ENCODE measurements at regions of chr14 and their contacts with region 1.

Region 1: GRCh38 chr14:22386924-22387775 is 201.9 kb downstream of the DAD1 start:
- DNase-seq: peak; percentile 67 to 77
- H3K4me3 ChIP-seq: no peak overlapping the region
- H3K4me3 Mint-ChIP-seq: no peak overlapping the region
- H3K27ac Mint-ChIP-seq: peak overlapping the region; percentile 38
- H3K4me1 ChIP-seq: peaks cover 66% of the 10 kb centered on the region
- H3K4me1 Mint-ChIP-seq: peaks cover 54% of the 10 kb centered on the region
- H3K27me3 ChIP-seq: no peaks in the 10 kb centered on the region
- H3K27me3 Mint-ChIP-seq: no peaks in the 10 kb centered on the region
- CTCF ChIP-seq: peak; percentile 64 to 69

Region 2: DNA sequence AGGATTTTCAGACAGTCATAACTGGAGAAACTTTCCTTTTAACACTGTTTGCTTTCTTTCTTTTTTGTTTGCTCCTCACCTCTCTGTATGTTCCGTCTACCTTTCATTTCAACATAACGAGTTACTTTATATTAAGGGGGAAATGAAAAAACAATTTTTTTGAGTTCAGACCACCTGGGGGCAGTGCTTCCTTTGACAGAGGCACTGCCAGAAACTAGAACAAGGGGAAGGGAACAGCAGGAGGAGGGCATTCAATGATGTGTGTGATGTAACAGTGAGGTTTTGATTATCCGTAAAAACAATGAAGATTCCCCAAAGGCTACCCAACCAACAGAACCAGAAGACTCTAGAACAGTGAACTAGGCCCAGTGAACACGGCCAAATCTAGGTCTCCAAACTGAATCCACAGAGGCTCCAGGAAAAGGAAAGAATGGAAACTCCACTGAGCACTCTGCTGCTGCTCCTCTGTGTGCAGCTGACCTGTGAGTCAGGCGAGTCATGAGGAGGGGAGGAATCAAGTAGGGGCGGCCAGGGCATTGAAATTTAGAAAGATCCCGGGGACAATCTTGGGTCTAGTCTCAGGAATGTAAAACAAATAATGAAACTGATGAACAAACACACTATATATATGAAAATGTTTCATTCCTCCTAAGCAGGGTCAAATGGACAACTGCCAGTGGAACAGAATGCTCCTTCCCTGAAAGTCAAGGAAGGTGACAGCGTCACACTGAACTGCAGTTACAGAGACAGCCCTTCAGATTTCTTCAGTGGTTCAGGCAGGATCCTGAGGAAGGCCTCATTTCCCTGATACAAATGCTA is 121.6 kb before region 1 on chr14:
- CTCF ChIA-PET with region 1: no interaction called
- POLR2A ChIA-PET with region 1: no interaction called
- intact Hi-C with region 1: loop called (anchors 2 kb)
- DNase-seq: peak; percentile 39 to 59
- H3K4me3 ChIP-seq: no peak overlapping the region
- H3K4me3 Mint-ChIP-seq: peak overlapping the region; percentile 41
- H3K27ac Mint-ChIP-seq: peak overlapping the region; percentile 68
- H3K4me1 ChIP-seq: peaks cover 45% of the 10 kb centered on the region
- H3K4me1 Mint-ChIP-seq: peaks cover 48% of the 10 kb centered on the region
- H3K27me3 ChIP-seq: no peaks in the 10 kb centered on the region
- H3K27me3 Mint-ChIP-seq: no peaks in the 10 kb centered on the region
- CTCF ChIP-seq: peak; percentile 38 to 49

Region 3: GRCh38 chr14:22314181-22314820 is 72.8 kb before region 1 on chr14:
- CTCF ChIA-PET with region 1: interaction called, 4 read pairs
- POLR2A ChIA-PET with region 1: no interaction called
- intact Hi-C with region 1: loop called (anchors 1 kb)
- DNase-seq: peak in 1 of 2 experiments; percentile 66
- H3K4me3 ChIP-seq: no peak overlapping the region
- H3K4me3 Mint-ChIP-seq: no peak overlapping the region
- H3K27ac Mint-ChIP-seq: peak overlapping the region; percentile 37
- H3K4me1 ChIP-seq: peaks cover 6% of the 10 kb centered on the region; the same call in 1 of the 2 replicates
- H3K4me1 Mint-ChIP-seq: peaks cover 19% of the 10 kb centered on the region
- H3K27me3 ChIP-seq: no peaks in the 10 kb centered on the region
- H3K27me3 Mint-ChIP-seq: no peaks in the 10 kb centered on the region
- CTCF ChIP-seq: peak; percentile 64 to 65

Region 4: DNA sequence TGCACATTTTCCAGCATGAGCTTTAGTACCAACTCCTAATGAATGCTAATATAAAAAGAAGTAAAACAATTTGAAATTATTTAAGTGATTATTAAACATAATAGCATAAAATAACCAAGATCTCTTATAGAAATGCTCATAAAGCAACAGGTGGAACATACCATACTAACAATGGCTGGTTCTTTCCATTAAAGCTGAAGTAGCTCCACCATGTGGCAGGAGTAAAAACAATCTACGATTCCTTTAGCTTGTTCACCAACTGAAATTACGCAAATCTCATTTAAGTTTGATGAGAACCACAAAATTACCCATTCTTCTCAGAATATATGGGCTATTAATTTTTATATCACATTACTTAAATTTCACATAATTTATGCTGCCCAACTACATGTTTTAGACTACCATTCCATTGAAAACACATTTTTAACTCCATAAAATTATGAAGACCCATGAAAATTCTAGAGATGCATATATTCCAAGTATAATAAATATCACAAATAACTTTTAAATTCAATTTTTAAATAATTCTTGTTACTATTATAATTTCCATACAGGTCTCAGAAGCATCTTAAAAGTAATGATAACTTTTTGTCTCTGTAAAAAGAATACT is 11.7 kb before region 1 on chr14:
- CTCF ChIA-PET with region 1: interaction called, 13 read pairs
- POLR2A ChIA-PET with region 1: no interaction called
- intact Hi-C with region 1: no loop called
- DNase-seq: peak in 1 of 2 experiments; percentile 60
- H3K4me3 ChIP-seq: no peak overlapping the region
- H3K4me3 Mint-ChIP-seq: no peak overlapping the region
- H3K27ac Mint-ChIP-seq: no peak overlapping the region
- H3K4me1 ChIP-seq: peaks cover 42% of the 10 kb centered on the region
- H3K4me1 Mint-ChIP-seq: peaks cover 23% of the 10 kb centered on the region
- H3K27me3 ChIP-seq: no peaks in the 10 kb centered on the region
- H3K27me3 Mint-ChIP-seq: no peaks in the 10 kb centered on the region
- CTCF ChIP-seq: peak; percentile 53 to 65

Region 5: GRCh38 chr14:22434030-22434429 is 46.9 kb after region 1 on chr14:
- CTCF ChIA-PET with region 1: no interaction called
- POLR2A ChIA-PET with region 1: no interaction called
- intact Hi-C with region 1: loop called (anchors 1 kb)
- DNase-seq: no peak
- H3K4me3 ChIP-seq: no peak overlapping the region
- H3K4me3 Mint-ChIP-seq: no peak overlapping the region
- H3K27ac Mint-ChIP-seq: no peak overlapping the region
- H3K4me1 ChIP-seq: no peaks in the 10 kb centered on the region
- H3K4me1 Mint-ChIP-seq: no peaks in the 10 kb centered on the region
- H3K27me3 ChIP-seq: no peaks in the 10 kb centered on the region
- H3K27me3 Mint-ChIP-seq: no peaks in the 10 kb centered on the region
- CTCF ChIP-seq: peak; percentile 24 to 30

Region 6: DNA sequence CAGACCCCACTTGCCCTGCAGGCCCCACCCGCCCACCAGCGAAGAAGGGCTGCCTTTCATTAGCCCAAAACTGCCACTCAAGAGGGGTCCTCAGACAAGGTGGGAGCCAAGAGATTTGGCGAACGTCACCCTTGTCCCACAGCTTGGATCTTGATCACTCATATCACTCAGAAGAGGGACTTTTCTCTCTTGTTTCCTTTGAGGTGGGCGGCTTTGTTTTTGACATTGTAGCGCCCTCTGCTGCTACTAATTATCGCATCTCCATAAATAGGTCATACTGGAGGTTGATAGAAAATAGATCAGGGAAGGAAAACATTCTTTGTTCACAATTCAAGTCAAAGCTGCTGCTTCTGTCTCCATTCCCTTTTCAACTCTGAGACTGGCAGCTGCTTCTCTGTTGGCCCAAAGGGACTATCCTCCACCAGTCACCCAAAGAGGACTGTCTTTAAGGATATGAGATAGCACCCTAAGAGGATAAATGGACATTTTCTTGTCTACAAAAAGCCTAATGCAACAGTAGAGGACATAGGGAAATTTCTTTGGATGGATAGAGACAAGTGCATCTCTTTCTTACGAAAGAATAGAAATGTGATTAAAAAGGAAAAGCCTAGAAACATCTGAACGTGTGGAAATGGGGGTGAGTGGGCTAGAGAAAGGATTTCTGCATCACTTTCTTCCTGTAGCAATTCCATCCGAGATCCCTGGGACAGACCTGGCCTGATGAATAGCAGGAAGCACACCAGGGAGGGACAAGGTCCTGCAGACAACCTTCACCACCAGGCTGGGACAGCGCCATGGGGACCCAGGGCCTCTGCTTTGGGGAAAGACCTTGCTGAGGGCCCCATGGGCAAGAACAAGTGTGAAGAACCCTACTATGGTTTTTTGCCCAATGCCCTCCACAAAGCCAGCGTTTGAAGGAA is 86.0 kb after region 1 on chr14:
- CTCF ChIA-PET with region 1: interaction called, 19 read pairs
- POLR2A ChIA-PET with region 1: no interaction called
- intact Hi-C with region 1: loop called (anchors 1 kb)
- DNase-seq: peak; percentile 39 to 55
- H3K4me3 ChIP-seq: no peak overlapping the region
- H3K4me3 Mint-ChIP-seq: no peak overlapping the region
- H3K27ac Mint-ChIP-seq: no peak overlapping the region
- H3K4me1 ChIP-seq: peaks cover 4% of the 10 kb centered on the region; the same call in 1 of the 2 replicates
- H3K4me1 Mint-ChIP-seq: peaks cover 13% of the 10 kb centered on the region
- H3K27me3 ChIP-seq: no peaks in the 10 kb centered on the region
- H3K27me3 Mint-ChIP-seq: no peaks in the 10 kb centered on the region
- CTCF ChIP-seq: peak; percentile 60 to 66

Region 7: DNA sequence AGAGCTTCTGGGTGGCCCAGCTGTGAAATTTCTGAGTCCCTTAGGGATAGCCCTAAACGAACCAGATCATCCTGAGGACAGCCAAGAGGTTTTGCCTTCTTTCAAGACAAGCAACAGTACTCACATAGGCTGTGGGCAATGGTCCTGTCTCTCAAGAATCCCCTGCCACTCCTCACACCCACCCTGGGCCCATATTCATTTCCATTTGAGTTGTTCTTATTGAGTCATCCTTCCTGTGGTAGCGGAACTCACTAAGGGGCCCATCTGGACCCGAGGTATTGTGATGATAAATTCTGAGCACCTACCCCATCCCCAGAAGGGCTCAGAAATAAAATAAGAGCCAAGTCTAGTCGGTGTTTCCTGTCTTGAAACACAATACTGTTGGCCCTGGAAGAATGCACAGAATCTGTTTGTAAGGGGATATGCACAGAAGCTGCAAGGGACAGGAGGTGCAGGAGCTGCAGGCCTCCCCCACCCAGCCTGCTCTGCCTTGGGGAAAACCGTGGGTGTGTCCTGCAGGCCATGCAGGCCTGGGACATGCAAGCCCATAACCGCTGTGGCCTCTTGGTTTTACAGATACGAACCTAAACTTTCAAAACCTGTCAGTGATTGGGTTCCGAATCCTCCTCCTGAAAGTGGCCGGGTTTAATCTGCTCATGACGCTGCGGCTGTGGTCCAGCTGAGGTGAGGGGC is 163.0 kb after region 1 on chr14:
- CTCF ChIA-PET with region 1: interaction called, 5 read pairs
- POLR2A ChIA-PET with region 1: no interaction called
- intact Hi-C with region 1: loop called (anchors 1 kb)
- DNase-seq: no peak
- H3K4me3 ChIP-seq: no peak overlapping the region
- H3K4me3 Mint-ChIP-seq: no peak overlapping the region
- H3K27ac Mint-ChIP-seq: peak overlapping the region; percentile 94
- H3K4me1 ChIP-seq: peaks cover 33% of the 10 kb centered on the region
- H3K4me1 Mint-ChIP-seq: peaks cover 20% of the 10 kb centered on the region
- H3K27me3 ChIP-seq: no peaks in the 10 kb centered on the region
- H3K27me3 Mint-ChIP-seq: no peaks in the 10 kb centered on the region
- CTCF ChIP-seq: no peak

Measured in Caco-2 (cell line).